ENCODE measurements at regions of chr2 and their contacts with region 1.

Region 1: DNA sequence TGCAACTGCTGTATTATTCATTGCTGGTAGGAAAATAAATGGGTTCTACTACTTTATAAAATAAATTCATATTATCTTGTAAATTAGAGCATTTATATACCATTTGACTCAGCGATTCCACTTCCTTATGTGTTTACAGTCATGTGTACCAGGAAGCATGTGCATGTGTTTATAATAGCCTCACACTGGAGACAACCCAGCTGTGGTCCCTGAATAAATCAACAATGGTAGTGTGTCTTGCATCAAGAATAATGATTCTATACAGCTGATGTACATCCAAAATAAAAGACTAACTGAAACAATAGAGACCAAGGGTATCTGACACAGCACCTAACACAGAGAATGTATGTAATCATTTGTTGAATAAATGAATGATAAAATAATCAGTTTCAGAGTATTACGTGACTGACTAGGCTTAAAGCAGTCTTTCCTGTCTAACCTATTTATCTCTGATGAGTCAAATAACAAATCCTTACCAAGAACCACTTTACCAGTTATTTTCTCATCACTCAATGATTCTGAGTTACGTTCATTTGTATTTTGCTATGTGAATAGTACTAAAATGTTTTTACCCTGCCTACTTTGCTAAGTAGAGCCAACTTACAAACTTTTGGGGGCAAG is 216.8 kb downstream of the UBE2E3 start:
- DNase-seq: peak; percentile 22
- H3K4me3 Mint-ChIP-seq: peak overlapping the region; percentile 18
- H3K27ac Mint-ChIP-seq: peak overlapping the region; percentile 89
- H3K4me1 Mint-ChIP-seq: peaks cover 71% of the 10 kb centered on the region
- H3K27me3 Mint-ChIP-seq: no peaks in the 10 kb centered on the region

Region 2: DNA sequence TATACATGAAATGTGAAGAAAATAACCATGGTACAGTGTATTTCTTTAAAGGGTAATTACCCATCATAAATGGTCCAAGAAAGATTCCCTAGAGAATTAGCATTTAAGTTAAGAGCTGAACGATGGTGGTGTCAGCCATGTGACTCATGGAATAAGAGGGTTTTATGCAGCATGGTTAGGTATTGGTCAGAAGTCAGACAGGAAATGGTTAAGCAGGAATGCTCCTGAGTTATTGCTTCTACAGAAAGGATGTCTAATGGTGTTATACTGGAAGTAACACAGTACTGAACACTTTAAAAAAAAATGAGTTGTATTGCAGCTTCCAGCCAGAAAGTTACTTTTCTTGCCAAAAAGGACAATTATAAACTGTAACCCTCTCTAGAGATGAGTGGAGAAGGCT is 289.5 kb before region 1 on chr2:
- CTCF ChIA-PET with region 1: no interaction called
- POLR2A ChIA-PET with region 1: no interaction called
- DNase-seq: no peak
- H3K4me3 Mint-ChIP-seq: no peak overlapping the region
- H3K27ac Mint-ChIP-seq: no peak overlapping the region
- H3K4me1 Mint-ChIP-seq: no peaks in the 10 kb centered on the region
- H3K27me3 Mint-ChIP-seq: peaks cover 16% of the 10 kb centered on the region

Region 3: GRCh38 chr2:181104512-181105115 is 92.6 kb before region 1 on chr2:
- CTCF ChIA-PET with region 1: interaction called, 4 read pairs
- POLR2A ChIA-PET with region 1: interaction called, 38 read pairs
- DNase-seq: no peak
- H3K4me3 Mint-ChIP-seq: peak overlapping the region; percentile 19
- H3K27ac Mint-ChIP-seq: peak overlapping the region; percentile 34
- H3K4me1 Mint-ChIP-seq: peaks cover 51% of the 10 kb centered on the region
- H3K27me3 Mint-ChIP-seq: no peaks in the 10 kb centered on the region

Region 4: GRCh38 chr2:181130686-181131085 is 66.6 kb before region 1 on chr2:
- CTCF ChIA-PET with region 1: no interaction called
- POLR2A ChIA-PET with region 1: interaction called, 50 read pairs
- DNase-seq: no peak
- H3K4me3 Mint-ChIP-seq: peak overlapping the region; percentile 67
- H3K27ac Mint-ChIP-seq: peak overlapping the region; percentile 87
- H3K4me1 Mint-ChIP-seq: peaks cover 65% of the 10 kb centered on the region
- H3K27me3 Mint-ChIP-seq: no peaks in the 10 kb centered on the region

Region 5: GRCh38 chr2:181165199-181165868 is 31.9 kb before region 1 on chr2:
- CTCF ChIA-PET with region 1: no interaction called
- POLR2A ChIA-PET with region 1: interaction called, 10 read pairs
- DNase-seq: no peak
- H3K4me3 Mint-ChIP-seq: peak overlapping the region; percentile 56
- H3K27ac Mint-ChIP-seq: peak overlapping the region; percentile 95
- H3K4me1 Mint-ChIP-seq: peaks cover 59% of the 10 kb centered on the region
- H3K27me3 Mint-ChIP-seq: no peaks in the 10 kb centered on the region

Region 6: GRCh38 chr2:181223234-181223633 is 26.0 kb after region 1 on chr2:
- CTCF ChIA-PET with region 1: interaction called, 4 read pairs
- POLR2A ChIA-PET with region 1: interaction called, 34 read pairs
- DNase-seq: no peak
- H3K4me3 Mint-ChIP-seq: peak overlapping the region; percentile 62
- H3K27ac Mint-ChIP-seq: peak overlapping the region; percentile 97
- H3K4me1 Mint-ChIP-seq: peaks cover 51% of the 10 kb centered on the region
- H3K27me3 Mint-ChIP-seq: no peaks in the 10 kb centered on the region

Region 7: DNA sequence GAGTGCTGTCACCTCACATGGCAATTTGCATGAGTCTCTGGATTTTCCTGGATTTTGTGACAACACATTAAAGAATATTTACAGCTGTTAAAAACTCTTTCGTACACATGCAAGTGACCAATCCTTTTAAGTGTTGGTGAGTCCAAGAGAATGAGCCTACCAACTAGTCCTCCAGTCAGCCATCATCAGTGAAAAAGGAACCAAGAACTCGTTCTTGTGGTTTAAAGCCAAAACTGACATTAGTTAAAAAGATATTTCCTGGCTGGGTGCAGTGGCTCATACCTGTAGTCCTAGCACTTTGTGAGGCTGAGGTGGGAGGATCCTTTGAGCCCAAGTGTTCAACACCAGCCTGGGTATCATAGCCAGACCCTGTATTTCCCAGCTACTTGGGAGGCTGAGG is 44.5 kb after region 1 on chr2:
- CTCF ChIA-PET with region 1: interaction called, 6 read pairs
- POLR2A ChIA-PET with region 1: interaction called, 14 read pairs
- DNase-seq: peak; percentile 26
- H3K4me3 Mint-ChIP-seq: no peak overlapping the region
- H3K27ac Mint-ChIP-seq: peak overlapping the region; percentile 84
- H3K4me1 Mint-ChIP-seq: peaks cover 65% of the 10 kb centered on the region
- H3K27me3 Mint-ChIP-seq: no peaks in the 10 kb centered on the region

Region 8: GRCh38 chr2:181457121-181457740 is 260.0 kb after region 1 on chr2 and contains the start of gene ITGA4:
- CTCF ChIA-PET with region 1: interaction called, 9 read pairs
- POLR2A ChIA-PET with region 1: interaction called, 87 read pairs
- DNase-seq: peak; percentile 90
- H3K4me3 Mint-ChIP-seq: peak within 1 kb of the TSS; percentile 90
- H3K27ac Mint-ChIP-seq: peak within 1 kb of the TSS; percentile 95
- H3K4me1 Mint-ChIP-seq: peaks cover 40% of the 10 kb centered on the region
- H3K27me3 Mint-ChIP-seq: no peaks in the 10 kb centered on the region
- total RNA-seq, gene ITGA4: 252 to 265 TPM

Measured in activated CD4-positive, alpha-beta memory T cell treated with anti-CD3 and anti-CD28 coated beads, Interleukin-2, amount 10 ng/mL, durations not matched to agents 7 days and 5 days (primary cell).